ENCODE measurements at regions of chr4 and their contacts with region 1.

Region 1: GRCh38 chr4:105146276-105147015 is at the start of gene TET2:
- DNase-seq: peak; percentile 81 to 93 (median 92)
- ATAC-seq: peak; percentile 93
- H3K4me3 ChIP-seq: peak within 1 kb of the TSS; percentile 99
- H3K27ac ChIP-seq: peak within 1 kb of the TSS; percentile 96
- H3K4me1 ChIP-seq: no peaks in the 10 kb centered on the region
- H3K27me3 ChIP-seq: no peaks in the 10 kb centered on the region
- total RNA-seq, gene TET2: 19.7 to 24.0 (median 22.0) TPM

Region 2: DNA sequence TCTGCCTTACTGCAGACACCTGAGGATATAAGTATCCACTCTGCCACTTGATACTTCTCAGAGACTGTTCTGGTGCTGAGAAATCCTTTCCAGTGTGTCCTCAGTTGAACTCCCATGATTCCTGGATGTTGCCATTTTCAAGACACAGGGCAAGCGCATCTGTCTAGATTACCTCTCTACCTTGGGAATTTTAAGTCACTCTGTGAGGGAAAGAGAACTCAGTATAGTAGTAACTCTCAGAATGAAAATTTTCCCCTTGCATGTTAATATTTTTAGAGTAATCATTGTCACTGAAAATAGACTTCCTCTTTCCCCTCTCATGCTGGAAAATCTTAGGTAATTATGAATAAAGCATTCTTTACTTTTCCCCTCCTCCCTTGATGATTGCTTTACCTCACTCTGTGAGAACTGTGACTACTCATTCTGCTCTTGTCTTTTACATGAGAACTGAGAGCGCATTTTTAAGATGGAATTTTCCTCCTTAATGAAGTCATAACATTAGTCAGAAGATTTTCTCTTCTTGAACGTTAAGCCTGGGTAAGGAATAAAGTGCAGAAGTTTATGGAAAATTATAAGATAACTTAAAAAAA is 45.3 kb after region 1 on chr4:
- intact Hi-C with region 1: loop called in 2 of 4 experiments (anchors 5 to 10 kb)
- DNase-seq: no peak
- ATAC-seq: peak; percentile 49 to 67
- H3K4me3 ChIP-seq: peak overlapping the region; percentile 15
- H3K27ac ChIP-seq: peak overlapping the region; percentile 75
- H3K4me1 ChIP-seq: peaks cover 8% of the 10 kb centered on the region
- H3K27me3 ChIP-seq: no peaks in the 10 kb centered on the region

Region 3: DNA sequence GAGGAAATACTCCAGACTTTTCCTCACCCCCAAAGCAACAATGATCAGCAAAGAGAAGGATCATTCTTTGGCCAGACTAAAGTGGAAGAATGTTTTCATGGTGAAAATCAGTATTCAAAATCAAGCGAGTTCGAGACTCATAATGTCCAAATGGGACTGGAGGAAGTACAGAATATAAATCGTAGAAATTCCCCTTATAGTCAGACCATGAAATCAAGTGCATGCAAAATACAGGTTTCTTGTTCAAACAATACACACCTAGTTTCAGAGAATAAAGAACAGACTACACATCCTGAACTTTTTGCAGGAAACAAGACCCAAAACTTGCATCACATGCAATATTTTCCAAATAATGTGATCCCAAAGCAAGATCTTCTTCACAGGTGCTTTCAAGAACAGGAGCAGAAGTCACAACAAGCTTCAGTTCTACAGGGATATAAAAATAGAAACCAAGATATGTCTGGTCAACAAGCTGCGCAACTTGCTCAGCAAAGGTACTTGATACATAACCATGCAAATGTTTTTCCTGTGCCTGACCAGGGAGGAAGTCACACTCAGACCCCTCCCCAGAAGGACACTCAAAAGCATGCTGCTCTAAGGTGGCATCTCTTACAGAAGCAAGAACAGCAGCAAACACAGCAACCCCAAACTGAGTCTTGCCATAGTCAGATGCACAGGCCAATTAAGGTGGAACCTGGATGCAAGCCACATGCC is 89.9 kb after region 1 on chr4:
- intact Hi-C with region 1: loop called in 2 of 4 experiments (anchors 10 kb)
- DNase-seq: no peak
- ATAC-seq: no peak
- H3K4me3 ChIP-seq: no peak overlapping the region
- H3K27ac ChIP-seq: no peak overlapping the region
- H3K4me1 ChIP-seq: peaks cover 9% of the 10 kb centered on the region
- H3K27me3 ChIP-seq: no peaks in the 10 kb centered on the region

Region 4: GRCh38 chr4:105471566-105472176 is 325.2 kb after region 1 on chr4:
- intact Hi-C with region 1: loop called in 3 of 4 experiments (anchors 2 to 10 kb)
- DNase-seq: peak in 2 of 3 donors; percentile 43
- ATAC-seq: peak; percentile 48
- H3K4me3 ChIP-seq: peak overlapping the region; percentile 72
- H3K27ac ChIP-seq: peak overlapping the region; percentile 67
- H3K4me1 ChIP-seq: no peaks in the 10 kb centered on the region
- H3K27me3 ChIP-seq: no peaks in the 10 kb centered on the region

Region 5: DNA sequence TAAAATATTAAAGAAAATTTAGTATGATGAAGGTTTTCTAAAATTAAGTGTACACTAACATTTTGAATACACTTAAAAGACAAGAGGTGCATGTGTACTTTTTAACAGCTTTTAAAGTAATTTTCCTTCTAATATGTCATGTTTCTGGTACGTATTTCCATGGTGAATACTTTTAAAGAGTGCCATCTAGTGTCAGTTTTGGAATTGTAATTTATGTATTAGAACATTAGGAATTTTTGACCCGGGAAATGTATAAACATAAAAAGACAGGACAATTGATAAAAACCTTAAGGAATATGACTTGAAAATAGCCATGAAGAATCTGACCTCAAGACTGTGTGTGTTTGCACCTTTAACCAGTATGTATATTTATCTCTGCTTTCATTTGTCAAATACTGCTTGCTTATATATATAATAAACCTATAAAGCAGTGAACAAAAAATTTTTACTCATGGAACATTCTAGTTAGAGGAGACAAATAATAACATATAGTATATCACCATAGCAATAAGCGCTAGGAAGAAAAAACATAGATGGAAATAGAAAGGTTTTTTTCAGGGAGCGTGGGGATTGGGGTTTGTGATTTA is 569.3 kb after region 1 on chr4:
- intact Hi-C with region 1: loop called in 1 of 4 experiments (anchors 10 kb)
- DNase-seq: no peak
- ATAC-seq: no peak
- H3K4me3 ChIP-seq: peak overlapping the region; percentile 15
- H3K27ac ChIP-seq: no peak overlapping the region
- H3K4me1 ChIP-seq: no peaks in the 10 kb centered on the region
- H3K27me3 ChIP-seq: no peaks in the 10 kb centered on the region

Measured in right cardiac atrium (tissue), 5 donors.